Posterior cingulate gyrus (tissue), 11 donors: ENCODE measurements at regions of chr3 and their contacts with region 1.

Region 1: GRCh38 chr3:98522244-98523090 is at the start of gene CLDND1:
- DNase-seq: peak; percentile 96 to 100 (median 98)

Region 2: DNA sequence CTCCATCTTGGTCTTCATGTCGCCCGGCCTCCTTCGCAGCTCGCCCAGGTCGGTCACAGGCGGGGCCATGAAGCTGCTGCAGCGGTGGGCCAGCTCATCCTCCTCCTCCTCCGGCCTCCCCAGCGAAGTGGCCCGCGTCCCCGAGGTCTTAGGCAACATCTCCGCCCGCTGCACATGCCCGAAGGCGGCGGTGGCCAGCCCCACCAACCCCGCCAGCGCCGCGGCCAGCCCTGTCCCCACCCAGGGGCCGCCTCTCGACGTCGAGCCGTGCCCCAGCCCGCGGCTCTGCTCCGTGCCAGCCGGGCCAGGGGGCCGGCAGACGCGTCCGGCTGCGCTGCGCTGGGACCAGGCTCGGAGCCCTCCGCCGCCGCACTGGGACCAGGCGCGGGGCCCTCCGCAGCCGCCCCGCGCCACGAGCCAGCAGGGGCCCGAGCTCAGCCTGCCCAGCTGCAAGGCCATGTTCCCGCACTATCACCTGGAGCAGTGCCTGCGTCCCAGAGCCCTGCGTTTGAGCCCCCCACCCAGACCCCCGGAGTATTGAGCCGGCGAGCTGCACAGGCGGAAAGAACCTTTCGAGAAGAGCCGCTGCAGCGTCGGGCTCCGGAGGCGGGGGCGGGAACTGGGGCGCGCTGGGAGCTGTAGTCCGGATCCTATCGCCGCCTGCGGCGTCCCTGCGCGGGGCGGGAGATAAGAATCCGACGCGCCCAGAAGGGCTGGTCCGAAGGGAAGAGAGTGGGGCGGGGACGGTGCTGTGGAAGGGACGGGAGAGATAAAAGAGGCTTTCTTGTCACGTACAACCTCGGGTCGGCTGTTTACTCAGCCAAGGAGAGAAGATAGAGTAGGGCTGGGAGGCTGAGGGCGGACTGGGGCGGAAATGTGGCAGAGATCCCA is 70.8 kb after region 1 on chr3 and contains the start of gene CPOX:
- intact Hi-C with region 1: loop called (anchors 1 kb)
- DNase-seq: peak; percentile 85 to 98 (median 90)

Region 3: DNA sequence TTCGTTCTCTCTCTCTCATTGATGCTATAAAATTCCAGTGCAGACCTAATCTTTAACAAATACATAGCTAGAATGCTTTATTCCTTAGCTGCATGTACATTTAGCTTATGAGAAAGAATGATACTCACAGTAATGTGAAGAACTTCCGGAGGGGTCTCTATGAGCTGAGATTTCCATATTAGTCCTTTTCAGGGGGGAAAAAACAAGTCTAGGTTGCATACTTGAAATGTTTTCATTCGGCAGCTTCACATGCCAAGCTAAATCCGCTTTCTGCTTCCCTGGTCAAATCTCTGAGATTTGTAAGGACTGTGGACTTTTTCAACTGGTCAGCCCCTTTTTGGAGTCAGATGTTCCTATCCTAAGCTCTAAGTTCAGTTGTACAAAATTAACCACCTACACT is 1004.5 kb after region 1 on chr3:
- intact Hi-C with region 1: no loop called
- DNase-seq: no peak